Caco-2 (cell line): ENCODE measurements at regions of chr6 and their contacts with region 1.

Region 1: DNA sequence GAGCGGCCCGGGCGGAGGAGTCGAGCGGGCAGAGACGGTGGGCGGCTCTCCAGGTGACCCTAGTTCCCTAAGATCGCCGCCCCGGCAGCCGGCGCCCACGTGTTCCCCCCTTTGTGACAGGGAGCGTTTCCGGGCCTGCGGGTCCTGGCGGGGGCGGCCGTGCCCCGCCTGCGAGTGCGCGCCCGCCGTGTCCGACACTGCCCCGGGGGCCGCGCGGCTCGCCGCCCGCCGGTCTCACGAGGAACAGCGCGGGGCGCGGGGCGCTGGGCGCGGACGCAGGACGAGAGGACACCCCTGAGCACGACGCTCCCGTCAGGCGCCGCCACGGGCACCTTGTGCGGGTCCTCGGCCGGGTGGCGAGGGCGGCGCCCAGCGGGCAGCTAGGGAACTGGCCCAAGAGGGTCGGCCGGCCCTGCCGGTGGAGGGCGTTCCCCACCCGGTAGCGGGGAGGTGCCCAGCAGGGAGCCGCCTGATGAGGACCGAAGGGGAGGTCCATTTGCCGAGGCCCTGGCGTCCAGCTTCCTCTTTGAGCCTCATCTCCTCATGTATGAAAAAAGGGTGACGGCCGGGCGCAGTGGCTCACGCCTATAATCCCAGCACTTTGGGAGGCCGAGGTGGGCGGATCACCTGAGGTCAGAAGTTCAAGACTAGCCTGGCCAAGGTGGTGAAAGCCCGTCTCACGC is at the start of gene VARS1:
- DNase-seq: peak; percentile 92 to 95
- H3K4me3 ChIP-seq: peak within 1 kb of the TSS; percentile 80
- H3K4me3 Mint-ChIP-seq: peak within 1 kb of the TSS; percentile 98
- H3K27ac Mint-ChIP-seq: peak within 1 kb of the TSS; percentile 94
- H3K4me1 ChIP-seq: 0 out of 2 replicates have a peak, but pooled peaks cover 3% of the 10 kb centered on the region
- H3K4me1 Mint-ChIP-seq: peaks cover 15% of the 10 kb centered on the region
- H3K27me3 ChIP-seq: no peaks in the 10 kb centered on the region
- H3K27me3 Mint-ChIP-seq: no peaks in the 10 kb centered on the region
- CTCF ChIP-seq: peak; percentile 78 to 94
- total RNA-seq, gene VARS1: 132 and 135 TPM in 2 replicates

Region 2: DNA sequence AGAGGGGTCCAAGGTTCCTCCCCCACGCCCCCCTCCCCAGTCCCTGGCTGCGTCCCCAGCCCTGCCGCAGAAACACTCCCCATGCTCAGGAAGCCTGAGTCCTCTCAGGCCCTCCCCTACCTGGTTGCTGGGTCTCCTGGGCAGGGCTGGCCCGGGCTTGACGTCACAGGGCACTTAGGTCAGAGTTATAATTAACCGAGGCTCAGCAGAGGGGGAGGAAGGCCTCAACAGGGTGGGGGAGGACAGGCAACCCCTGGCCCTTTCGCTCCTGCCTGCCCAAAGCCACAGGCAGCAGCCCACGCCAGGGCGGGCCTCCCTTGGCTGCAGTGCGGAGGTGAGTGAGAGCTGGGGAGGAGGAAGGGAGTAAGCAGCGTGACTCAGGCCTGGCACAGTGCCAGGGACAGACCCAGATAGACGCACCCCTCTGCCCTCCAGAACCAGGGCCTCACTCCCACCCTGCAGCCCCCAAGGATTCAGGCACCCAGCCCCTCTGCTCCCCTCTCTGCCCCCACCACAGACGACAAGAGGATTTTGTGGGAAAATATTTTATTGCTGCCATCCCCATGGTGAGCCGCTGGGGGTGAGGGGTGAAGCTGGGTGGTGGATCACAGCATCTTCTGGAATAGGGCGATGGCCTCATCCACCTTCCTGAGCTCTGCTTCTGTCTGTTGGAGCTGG is 18.6 kb before region 1 on chr6 and contains the start of gene VWA7:
- CTCF ChIA-PET with region 1: interaction called, 4 read pairs
- POLR2A ChIA-PET with region 1: no interaction called
- intact Hi-C with region 1: loop called (anchors 1 kb)
- DNase-seq: peak; percentile 69 to 85
- H3K4me3 ChIP-seq: no peak within 1 kb of the TSS
- H3K4me3 Mint-ChIP-seq: no peak within 1 kb of the TSS
- H3K27ac Mint-ChIP-seq: peak within 1 kb of the TSS; percentile 59
- H3K4me1 ChIP-seq: peaks cover 23% of the 10 kb centered on the region
- H3K4me1 Mint-ChIP-seq: peaks cover 5% of the 10 kb centered on the region
- H3K27me3 ChIP-seq: no peaks in the 10 kb centered on the region
- H3K27me3 Mint-ChIP-seq: no peaks in the 10 kb centered on the region
- CTCF ChIP-seq: no peak
- total RNA-seq, gene VWA7: 0.61 and 1.5 TPM in 2 replicates

Region 3: GRCh38 chr6:31806465-31807272 is 10.9 kb after region 1 on chr6 and contains the start of gene LSM2:
- CTCF ChIA-PET with region 1: interaction called, 21 read pairs
- POLR2A ChIA-PET with region 1: interaction called, 23 read pairs
- intact Hi-C with region 1: no loop called
- DNase-seq: peak; percentile 96 to 98
- H3K4me3 ChIP-seq: peak within 1 kb of the TSS; percentile 68
- H3K4me3 Mint-ChIP-seq: peak within 1 kb of the TSS; percentile 92
- H3K27ac Mint-ChIP-seq: peak within 1 kb of the TSS; percentile 89
- H3K4me1 ChIP-seq: peaks cover 12% of the 10 kb centered on the region; the same call in 1 of the 2 replicates
- H3K4me1 Mint-ChIP-seq: peaks cover 12% of the 10 kb centered on the region
- H3K27me3 ChIP-seq: no peaks in the 10 kb centered on the region
- H3K27me3 Mint-ChIP-seq: no peaks in the 10 kb centered on the region
- CTCF ChIP-seq: peak; percentile 25 to 36
- total RNA-seq, gene LSM2: 56.3 and 61.2 TPM in 2 replicates

Region 4: GRCh38 chr6:31815025-31815838 is 19.5 kb after region 1 on chr6 and contains the starts of genes HSPA1A and HSPA1L:
- CTCF ChIA-PET with region 1: interaction called, 6 read pairs
- POLR2A ChIA-PET with region 1: interaction called, 29 read pairs
- intact Hi-C with region 1: no loop called
- DNase-seq: peak; percentile 97 to 99
- H3K4me3 ChIP-seq: peak within 1 kb of the TSS; percentile 38
- H3K4me3 Mint-ChIP-seq: peak within 1 kb of the TSS; percentile 89
- H3K27ac Mint-ChIP-seq: peak within 1 kb of the TSS; percentile 96
- H3K4me1 ChIP-seq: peaks cover 30% of the 10 kb centered on the region
- H3K4me1 Mint-ChIP-seq: peaks cover 12% of the 10 kb centered on the region
- H3K27me3 ChIP-seq: no peaks in the 10 kb centered on the region
- H3K27me3 Mint-ChIP-seq: no peaks in the 10 kb centered on the region
- CTCF ChIP-seq: no peak
- total RNA-seq, gene HSPA1A: 77.3 and 96.9 TPM in 2 replicates
- total RNA-seq, gene HSPA1L: 0.86 and 1.6 TPM in 2 replicates